HepG2 (cell line): ENCODE measurements at regions of chr12 and their contacts with region 1.

Region 1: DNA sequence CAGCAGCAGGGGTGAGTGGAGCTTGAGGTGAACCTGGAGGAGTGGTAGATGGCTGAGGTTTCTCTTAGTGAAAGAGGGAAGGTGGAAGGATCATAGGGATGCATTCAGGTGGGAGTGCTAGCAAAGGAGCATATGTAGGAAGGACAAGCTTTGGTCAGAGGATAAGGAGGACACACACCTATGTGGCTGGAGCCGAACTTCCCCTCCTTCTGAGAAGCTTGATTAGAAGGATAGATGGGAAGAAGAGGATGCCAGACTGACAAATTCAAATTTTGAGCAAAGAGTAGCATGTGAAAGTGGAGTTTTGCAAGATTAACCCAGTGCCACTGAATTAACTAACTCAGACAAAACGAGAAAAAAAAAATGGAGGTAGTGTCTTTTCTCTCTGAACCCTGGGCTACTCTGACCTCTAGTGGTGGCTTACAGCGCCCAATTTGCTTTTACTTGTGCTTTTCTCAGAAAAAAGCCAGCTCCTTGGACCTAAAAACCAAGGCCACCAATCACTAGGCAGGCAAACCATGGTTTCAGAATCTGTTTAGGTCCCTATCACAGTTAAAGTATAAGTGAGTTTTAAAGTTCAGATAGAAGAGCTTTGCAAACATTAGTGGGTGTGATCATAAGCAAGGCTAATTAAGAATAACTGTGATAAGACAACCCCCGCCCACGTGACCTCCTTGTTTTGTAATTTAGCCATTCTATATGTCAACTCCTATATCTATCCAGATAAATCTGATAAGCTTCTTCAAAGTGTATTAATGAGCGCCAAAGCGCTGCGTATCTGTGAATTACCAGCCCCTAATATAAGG is 15.5 kb downstream of the EMP1 start:
- DNase-seq: peak; percentile 47
- ATAC-seq: peak; percentile 68; the same call in 2 of the 3 replicates
- H3K4me3 ChIP-seq: peak overlapping the region in 1 of 3 experiments; percentile 32; a peak in 1 of 6 replicates
- H3K27ac ChIP-seq: no peak overlapping the region
- H3K4me1 ChIP-seq: peaks cover 7% of the 10 kb centered on the region
- H3K27me3 ChIP-seq: peaks cover 0 to 26% of the 10 kb centered on the region in 2 experiments; a peak in 2 of 5 replicates
- CTCF ChIP-seq: peak; percentile 76
- EP300 ChIP-seq: no peak
- POLR2A ChIP-seq: no peak
- RAD21 ChIP-seq: peak; percentile 67

Region 2: DNA sequence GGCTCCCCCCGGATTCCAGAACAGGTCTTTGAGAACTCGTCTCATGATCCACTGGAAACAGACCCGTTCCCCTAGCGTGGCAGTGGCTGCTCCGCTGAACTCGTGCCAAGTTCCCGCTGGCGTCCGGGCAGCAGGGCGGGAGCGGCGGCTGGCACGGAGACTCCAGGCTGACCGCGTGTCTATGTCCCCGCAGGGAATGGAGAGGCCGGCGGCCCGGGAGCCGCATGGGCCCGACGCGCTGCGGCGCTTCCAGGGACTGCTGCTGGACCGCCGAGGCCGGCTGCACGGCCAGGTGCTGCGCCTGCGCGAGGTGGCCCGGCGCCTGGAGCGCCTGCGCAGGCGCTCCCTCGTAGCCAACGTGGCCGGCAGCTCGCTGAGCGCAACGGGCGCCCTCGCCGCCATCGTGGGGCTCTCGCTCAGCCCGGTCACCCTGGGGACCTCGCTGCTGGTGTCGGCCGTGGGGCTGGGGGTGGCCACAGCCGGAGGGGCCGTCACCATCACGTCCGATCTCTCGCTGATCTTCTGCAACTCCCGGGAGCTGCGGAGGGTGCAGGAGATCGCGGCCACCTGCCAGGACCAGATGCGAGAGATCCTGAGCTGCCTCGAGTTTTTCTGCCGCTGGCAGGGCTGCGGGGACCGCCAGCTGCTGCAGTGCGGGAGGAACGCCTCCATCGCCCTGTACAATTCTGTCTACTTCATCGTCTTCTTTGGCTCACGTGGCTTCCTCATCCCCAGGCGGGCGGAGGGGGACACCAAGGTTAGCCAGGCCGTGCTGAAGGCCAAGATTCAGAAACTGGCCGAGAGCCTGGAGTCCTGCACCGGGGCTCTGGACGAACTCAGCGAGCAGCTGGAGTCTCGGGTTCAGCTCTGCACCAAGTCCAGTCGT is 425.1 kb before region 1 on chr12:
- CTCF ChIA-PET with region 1: no interaction called
- POLR2A ChIA-PET with region 1: no interaction called
- in situ Hi-C with region 1: loop called (anchors 25 kb)
- intact Hi-C with region 1: no loop called
- DNase-seq: peak; percentile 32
- ATAC-seq: peak; percentile 92
- H3K4me3 ChIP-seq: peak overlapping the region in 2 of 3 experiments; percentile 18 to 51; a peak in 2 of 6 replicates
- H3K27ac ChIP-seq: no peak overlapping the region
- H3K4me1 ChIP-seq: peaks cover 37% of the 10 kb centered on the region
- H3K27me3 ChIP-seq: peaks cover 0 to 40% of the 10 kb centered on the region in 2 experiments; a peak in 4 of 5 replicates
- CTCF ChIP-seq: no peak
- EP300 ChIP-seq: no peak
- POLR2A ChIP-seq: peak in 1 of 2 experiments; percentile 50; a peak in 2 of 4 replicates
- RAD21 ChIP-seq: no peak

Region 3: DNA sequence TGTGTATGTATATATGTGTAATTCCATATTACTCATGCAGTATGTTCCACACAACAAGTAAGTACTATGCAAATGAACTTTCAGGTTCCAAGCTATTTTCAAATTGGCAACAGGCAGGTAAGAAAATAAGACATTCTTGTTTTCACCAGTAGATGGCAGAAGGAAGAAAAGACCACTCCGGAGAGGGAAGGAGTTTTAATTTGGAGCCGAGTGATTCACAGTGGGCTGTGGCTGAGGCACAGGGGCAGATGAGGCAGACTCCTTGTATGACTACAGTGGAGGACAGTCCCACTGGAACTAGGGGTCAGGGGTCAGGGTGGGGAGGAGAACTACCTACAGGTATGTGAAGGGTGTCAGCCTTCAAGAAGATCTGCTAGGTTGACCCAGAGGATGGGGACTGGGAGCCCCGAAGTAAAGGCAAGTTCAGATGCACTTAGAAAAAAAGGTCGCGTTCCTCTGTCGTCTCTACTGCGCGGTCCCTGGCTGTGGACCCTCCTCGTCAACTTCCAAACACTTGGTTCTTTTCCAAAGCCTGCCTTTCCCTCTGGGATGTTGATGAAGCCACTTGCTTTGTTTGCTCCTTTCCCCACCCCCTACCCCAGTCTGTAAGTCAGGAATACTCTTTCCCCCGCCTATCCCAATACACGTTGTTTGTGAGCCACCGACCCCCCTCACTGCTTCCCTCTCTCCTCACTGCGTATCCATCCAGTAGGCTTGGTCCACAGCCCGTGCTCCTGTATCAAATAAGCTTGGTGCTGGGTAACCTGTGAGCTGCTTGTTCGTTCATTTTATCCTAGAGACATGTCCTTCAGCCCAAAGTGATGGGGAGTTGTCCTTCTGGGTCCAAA is 374.8 kb before region 1 on chr12:
- CTCF ChIA-PET with region 1: interaction called, 7 read pairs
- POLR2A ChIA-PET with region 1: no interaction called
- in situ Hi-C with region 1: no loop called
- intact Hi-C with region 1: loop called (anchors 5 kb)
- DNase-seq: peak; percentile 37
- ATAC-seq: peak; percentile 69
- H3K4me3 ChIP-seq: no peak overlapping the region
- H3K27ac ChIP-seq: no peak overlapping the region
- H3K4me1 ChIP-seq: no peaks in the 10 kb centered on the region
- H3K27me3 ChIP-seq: no peaks in the 10 kb centered on the region
- CTCF ChIP-seq: peak; percentile 59
- EP300 ChIP-seq: no peak
- POLR2A ChIP-seq: no peak
- RAD21 ChIP-seq: no peak

Region 4: GRCh38 chr12:12983420-12984035 is 228.5 kb before region 1 on chr12:
- CTCF ChIA-PET with region 1: interaction called, 4 read pairs
- POLR2A ChIA-PET with region 1: no interaction called
- in situ Hi-C with region 1: no loop called
- intact Hi-C with region 1: loop called (anchors 2 kb)
- DNase-seq: peak; percentile 30
- ATAC-seq: peak; percentile 78
- H3K4me3 ChIP-seq: no peak overlapping the region
- H3K27ac ChIP-seq: no peak overlapping the region
- H3K4me1 ChIP-seq: no peaks in the 10 kb centered on the region
- H3K27me3 ChIP-seq: no peaks in the 10 kb centered on the region
- CTCF ChIP-seq: peak; percentile 62
- EP300 ChIP-seq: no peak
- POLR2A ChIP-seq: no peak
- RAD21 ChIP-seq: 0 out of 2 replicates have a peak, but pooled peaks have one; percentile 15

Region 5: DNA sequence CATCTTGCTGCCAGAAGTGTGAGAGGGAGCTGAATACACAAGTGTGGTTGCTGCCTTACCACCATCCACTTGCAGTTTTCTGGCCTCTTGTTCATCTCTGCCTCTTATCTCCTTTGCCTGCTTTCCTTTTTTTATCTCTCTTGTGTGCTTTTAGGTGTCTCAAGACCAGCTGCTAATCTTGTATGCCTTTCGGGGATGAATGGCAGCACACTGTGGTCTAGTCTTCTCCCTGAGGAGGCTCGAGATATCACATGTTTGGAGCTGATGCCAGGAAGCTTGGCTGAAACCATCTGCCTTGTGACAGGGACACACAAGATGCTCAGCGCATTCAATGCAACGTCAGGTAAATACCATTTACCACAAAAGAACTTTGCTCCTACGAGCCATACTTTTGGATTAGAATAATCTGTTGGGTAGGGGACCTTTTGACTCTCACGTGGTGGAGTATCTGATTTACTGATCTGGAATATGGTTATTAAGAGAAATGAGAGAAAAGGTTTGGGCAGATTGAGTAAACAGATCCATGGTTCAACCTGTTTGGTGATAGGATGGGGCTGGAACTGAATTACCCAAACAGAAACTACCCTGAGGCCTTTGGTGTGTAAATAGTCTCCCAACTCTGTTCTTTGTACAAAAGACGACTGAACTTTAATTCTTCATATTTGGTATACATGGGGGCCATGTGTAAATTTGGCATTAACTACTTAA is 150.5 kb before region 1 on chr12:
- CTCF ChIA-PET with region 1: no interaction called
- POLR2A ChIA-PET with region 1: no interaction called
- in situ Hi-C with region 1: no loop called
- intact Hi-C with region 1: no loop called
- DNase-seq: no peak
- ATAC-seq: no peak
- H3K4me3 ChIP-seq: no peak overlapping the region
- H3K27ac ChIP-seq: no peak overlapping the region
- H3K4me1 ChIP-seq: no peaks in the 10 kb centered on the region
- H3K27me3 ChIP-seq: no peaks in the 10 kb centered on the region
- CTCF ChIP-seq: no peak
- EP300 ChIP-seq: no peak
- POLR2A ChIP-seq: no peak
- RAD21 ChIP-seq: no peak

Region 6: DNA sequence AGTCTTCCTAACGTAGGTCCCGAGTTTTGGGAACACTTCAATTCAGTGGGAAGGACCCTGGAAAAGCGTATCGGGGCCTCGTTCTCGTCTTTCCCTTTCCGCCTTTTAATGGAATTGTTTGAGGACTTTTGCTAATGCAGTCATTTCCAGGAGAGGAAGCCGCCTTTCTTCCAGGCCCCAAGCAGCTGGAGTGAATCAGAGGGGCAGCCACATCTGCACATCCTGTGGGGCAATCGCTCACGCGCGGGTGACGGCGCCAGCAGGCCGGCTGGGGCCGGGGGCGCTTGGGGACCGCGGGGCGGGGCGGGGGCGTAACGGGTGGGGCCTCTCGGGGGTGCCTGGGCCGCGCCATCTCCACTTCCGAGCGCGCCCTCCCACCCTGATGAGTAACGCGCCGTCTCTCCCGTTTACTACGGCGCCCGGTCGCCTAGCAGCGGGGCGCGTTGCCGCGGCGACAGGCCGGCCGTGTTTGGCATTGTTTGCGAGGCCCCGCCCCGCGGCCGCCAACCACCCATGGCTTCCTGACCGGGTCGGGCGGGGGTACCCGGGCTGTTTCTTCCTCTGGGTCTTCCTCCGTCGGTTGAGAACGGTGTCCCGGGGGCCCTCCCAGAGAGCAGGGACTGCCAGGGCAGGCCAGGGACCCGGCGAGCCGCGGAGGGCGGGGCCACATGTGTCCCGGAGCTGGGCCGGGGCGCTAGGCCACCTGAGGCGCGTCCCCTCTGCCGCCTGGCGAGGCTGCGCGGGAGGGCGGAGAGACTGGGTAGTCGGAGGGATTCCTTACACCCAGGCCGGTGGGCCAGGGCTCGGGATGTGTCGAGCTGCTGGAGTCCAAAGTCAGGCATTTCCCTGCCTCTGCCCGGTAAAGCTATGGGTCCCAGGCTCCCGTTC is 110.9 kb before region 1 on chr12:
- CTCF ChIA-PET with region 1: interaction called, 14 read pairs
- POLR2A ChIA-PET with region 1: no interaction called
- in situ Hi-C with region 1: loop called (anchors 5 kb)
- intact Hi-C with region 1: loop called (anchors 2 kb)
- DNase-seq: peak; percentile 47
- ATAC-seq: peak; percentile 90
- H3K4me3 ChIP-seq: peak overlapping the region; percentile 63 to 82 (median 69)
- H3K27ac ChIP-seq: no peak overlapping the region
- H3K4me1 ChIP-seq: peaks cover 40% of the 10 kb centered on the region
- H3K27me3 ChIP-seq: peaks cover 0 to 42% of the 10 kb centered on the region in 2 experiments; a peak in 3 of 5 replicates
- CTCF ChIP-seq: no peak
- EP300 ChIP-seq: no peak
- POLR2A ChIP-seq: no peak
- RAD21 ChIP-seq: 0 out of 2 replicates have a peak, but pooled peaks have one; percentile 19